Uterus (tissue), 4 donors: ENCODE measurements at regions of chr2 and their contacts with region 1.

Region 1: GRCh38 chr2:197434541-197435513 is at the start of gene SF3B1:
- DNase-seq: peak; percentile 97 to 99
- H3K4me3 ChIP-seq: peak within 1 kb of the TSS; percentile 73 to 95
- H3K27ac ChIP-seq: peak within 1 kb of the TSS; percentile 96 to 97
- H3K4me1 ChIP-seq: peaks cover 0 to 9% of the 10 kb centered on the region in 2 donors
- H3K27me3 ChIP-seq: no peaks in the 10 kb centered on the region
- CTCF ChIP-seq: peak in 2 of 4 experiments; percentile 3 to 13
- POLR2A ChIP-seq: peak; percentile 92 to 98
- total RNA-seq, gene SF3B1: 356 to 1,013 (median 641) TPM

Region 2: DNA sequence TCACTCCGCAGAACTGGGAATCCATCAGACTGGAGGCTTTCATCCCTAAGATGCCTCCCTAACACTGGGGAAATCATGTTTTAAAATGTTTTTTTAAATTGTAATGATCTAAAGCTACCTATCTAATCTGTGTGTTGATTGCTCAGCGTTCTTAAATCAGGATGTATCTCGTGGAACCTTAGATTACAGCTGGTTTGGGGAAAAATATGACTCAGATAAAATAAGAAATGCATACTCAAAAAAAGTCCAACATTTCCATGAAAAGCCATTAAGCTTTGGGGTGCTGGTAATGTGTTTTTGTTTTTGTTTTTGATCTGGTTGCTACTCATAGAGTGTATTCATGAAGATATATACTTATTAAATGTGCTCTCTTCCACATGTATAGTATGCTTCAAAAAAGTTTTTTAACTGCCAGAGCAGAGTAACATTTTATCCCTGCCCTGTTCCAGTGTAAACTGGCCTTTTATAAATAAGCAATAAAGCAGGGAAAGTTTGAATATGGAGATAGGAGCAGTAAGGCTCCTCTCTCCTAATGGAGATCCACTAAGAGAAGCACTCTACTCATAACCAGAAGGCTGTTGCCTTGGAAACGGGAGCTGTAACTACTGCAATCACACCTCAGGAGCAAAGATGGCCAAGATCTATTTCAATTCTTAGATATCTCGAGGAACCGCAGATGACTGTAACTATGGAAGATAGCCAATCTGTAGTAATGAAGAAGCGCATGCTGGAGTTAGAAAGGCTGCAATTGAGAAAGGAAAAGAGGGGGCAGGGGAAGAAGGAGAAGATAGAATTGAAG is 165.8 kb before region 1 on chr2:
- intact Hi-C with region 1: no loop called
- DNase-seq: no peak
- H3K4me3 ChIP-seq: no peak overlapping the region
- H3K27ac ChIP-seq: no peak overlapping the region
- H3K4me1 ChIP-seq: peaks cover 0 to 5% of the 10 kb centered on the region in 2 donors
- H3K27me3 ChIP-seq: no peaks in the 10 kb centered on the region
- CTCF ChIP-seq: no peak
- POLR2A ChIP-seq: no peak

Region 3: DNA sequence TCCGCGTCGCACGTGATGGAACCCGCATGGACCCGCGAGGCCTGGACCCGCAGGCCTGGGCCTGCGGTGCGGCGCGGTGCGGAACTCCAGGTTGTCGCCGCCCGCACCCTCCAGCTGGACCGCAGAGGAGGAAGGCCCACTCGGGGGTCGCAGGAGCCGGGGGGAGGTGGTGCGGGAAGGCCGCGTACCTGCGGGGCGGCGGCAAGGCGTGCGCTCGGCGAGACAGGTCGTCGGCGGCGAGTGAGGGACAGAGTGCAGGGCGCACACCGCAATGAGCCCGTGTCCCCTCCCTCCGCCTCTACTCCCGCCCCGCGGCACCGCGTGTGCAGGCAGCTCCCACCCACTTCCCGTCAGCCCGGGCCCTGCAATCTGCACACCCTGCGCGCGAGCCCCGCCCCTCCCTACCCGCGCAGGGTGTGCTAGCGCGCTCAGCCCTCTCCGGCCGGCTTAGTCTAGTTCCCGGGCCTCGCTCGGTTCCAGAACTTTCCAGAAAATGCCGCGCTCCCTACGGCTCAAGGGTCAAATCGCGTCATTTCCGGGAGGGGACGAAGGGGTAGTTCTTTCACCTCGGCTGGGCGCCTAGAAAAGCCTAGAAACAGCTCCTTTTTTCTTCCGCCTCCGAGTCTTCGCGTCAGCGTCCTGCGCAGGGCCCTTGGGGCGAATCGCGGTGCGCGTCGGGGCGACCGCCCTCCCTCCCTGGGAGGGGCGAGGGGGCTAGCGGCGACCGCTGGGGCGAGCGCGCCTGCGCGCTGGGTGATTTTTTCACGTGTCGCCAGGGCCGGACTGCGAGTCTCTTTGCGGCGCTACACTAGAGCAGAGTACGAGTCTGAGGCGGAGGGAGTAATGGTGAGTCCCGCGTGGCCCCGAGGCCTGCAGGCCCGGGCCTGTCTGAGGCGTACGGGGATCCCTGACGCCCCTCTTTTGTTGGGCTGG is 65.0 kb after region 1 on chr2 and contains the starts of genes HSPD1 and HSPE1:
- intact Hi-C with region 1: loop called (anchors 10 kb)
- DNase-seq: peak; percentile 98 to 99
- H3K4me3 ChIP-seq: peak within 1 kb of the TSS; percentile 80 to 90
- H3K27ac ChIP-seq: peak within 1 kb of the TSS; percentile 97 to 99
- H3K4me1 ChIP-seq: peaks cover 0 to 14% of the 10 kb centered on the region in 2 donors
- H3K27me3 ChIP-seq: no peaks in the 10 kb centered on the region
- CTCF ChIP-seq: peak in 3 of 4 experiments; percentile 50 to 71 (median 57)
- POLR2A ChIP-seq: peak; percentile 93 to 96
- total RNA-seq, gene HSPD1: 76.8 to 258 (median 161) TPM
- total RNA-seq, gene HSPE1: 22.3 to 55.0 (median 39.4) TPM